ENCODE measurements at regions of chr1 and their contacts with region 1.

Region 1: DNA sequence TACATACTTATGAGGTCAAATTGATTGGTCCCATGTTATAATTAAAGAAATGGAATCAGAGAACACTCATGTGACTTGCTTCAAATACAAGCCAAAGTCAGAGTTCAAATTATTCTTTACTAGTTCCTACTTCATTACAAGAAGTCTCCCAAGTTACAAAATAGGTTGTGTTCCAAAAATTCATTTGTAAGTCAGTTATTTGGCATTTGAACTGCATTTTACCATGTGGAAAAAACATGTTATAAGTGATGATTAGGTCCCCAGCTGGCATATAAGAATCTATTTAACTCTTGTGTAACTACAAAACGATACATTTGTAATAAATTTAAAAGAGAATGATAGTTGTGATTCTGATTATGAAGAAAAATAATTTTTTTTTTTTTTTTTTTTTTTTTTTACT is 124.1 kb downstream of the DISP1 start:
- DNase-seq: no peak
- ATAC-seq: no peak
- H3K4me3 ChIP-seq: no peak overlapping the region
- H3K27ac ChIP-seq: no peak overlapping the region
- H3K4me1 ChIP-seq: peaks cover 0 to 8% (median 1%) of the 10 kb centered on the region in 12 donors
- H3K27me3 ChIP-seq: no peaks in the 10 kb centered on the region
- CTCF ChIP-seq: no peak
- POLR2A ChIP-seq: no peak

Region 2: DNA sequence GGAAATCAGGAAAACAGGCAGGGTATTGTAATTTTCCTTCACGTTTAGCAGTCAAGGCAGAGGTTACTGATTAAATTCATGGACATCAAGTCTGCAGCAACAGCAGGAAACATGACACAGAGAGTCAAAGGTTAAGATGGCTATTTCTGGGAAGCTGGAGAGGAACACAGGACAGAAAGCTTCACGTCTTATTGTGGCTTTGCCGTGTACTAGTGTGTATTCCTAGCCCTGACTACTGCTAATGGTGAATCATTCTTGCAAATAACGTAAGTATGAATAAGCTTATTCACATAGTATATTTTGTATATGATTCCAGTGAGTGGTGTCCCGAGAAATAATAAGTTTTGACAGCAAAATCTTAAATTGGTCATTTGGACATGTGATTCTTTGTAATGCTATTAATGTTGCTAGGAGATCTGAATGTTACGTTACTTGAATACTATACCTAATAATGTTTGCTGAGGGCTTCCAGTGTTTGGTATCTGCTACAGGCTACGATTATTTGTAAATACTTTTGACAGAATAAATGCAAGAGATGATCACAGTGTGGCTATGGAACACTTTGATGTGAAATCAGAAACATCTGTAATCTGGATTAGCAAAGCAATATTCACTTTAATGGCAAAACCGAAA is 46.7 kb before region 1 on chr1:
- intact Hi-C with region 1: loop called in 1 of 10 experiments (anchors 5 kb)
- DNase-seq: no peak
- ATAC-seq: peak in 3 of 4 donors; percentile 45 to 68 (median 56)
- H3K4me3 ChIP-seq: no peak overlapping the region
- H3K27ac ChIP-seq: peak overlapping the region in 4 of 12 donors; percentile 2 to 66 (median 35)
- H3K4me1 ChIP-seq: peaks cover 0 to 28% (median 10%) of the 10 kb centered on the region in 12 donors
- H3K27me3 ChIP-seq: no peaks in the 10 kb centered on the region
- CTCF ChIP-seq: no peak
- POLR2A ChIP-seq: no peak

Region 3: GRCh38 chr1:223016890-223017289 is 77.9 kb after region 1 on chr1:
- intact Hi-C with region 1: loop called in 1 of 10 experiments (anchors 5 kb)
- DNase-seq: no peak
- ATAC-seq: peak in 2 of 4 donors; percentile 8 to 27
- H3K4me3 ChIP-seq: no peak overlapping the region
- H3K27ac ChIP-seq: peak overlapping the region; percentile 8 to 79 (median 67)
- H3K4me1 ChIP-seq: peaks cover 0 to 26% (median 8%) of the 10 kb centered on the region in 12 donors
- H3K27me3 ChIP-seq: no peaks in the 10 kb centered on the region
- CTCF ChIP-seq: no peak
- POLR2A ChIP-seq: no peak

Measured in heart left ventricle (tissue), 16 donors.